AG04449 (cell line): ENCODE measurements at regions of chr6 and their contacts with region 1.

Region 1: DNA sequence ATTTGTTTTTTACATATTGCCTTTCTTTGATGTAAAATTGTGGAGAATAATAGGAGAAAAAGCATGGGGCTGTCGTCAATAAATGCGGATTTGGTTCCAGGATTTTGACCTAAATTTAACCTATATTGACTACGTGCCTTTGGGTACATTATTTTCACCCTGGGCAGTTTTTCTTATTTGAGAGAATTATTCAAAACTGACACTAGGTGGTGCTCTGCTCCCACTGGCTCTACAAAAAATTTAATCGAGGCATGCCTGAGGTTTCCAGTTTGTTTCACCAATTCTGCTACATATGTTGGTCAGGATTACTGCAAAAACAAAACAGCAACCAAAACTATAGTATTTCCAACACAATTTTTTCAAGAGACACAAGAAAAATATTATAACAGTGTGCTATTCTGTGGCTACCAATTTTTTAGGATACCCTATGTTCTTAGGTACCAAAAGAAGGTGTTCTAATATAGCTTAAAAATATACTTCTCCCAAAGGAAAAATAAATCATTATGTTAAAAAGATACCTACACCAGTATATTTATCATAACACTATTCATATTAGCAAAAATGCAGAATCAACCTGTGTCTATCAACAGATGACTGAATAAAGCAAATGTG is 48.6 kb upstream of the FABP7 start:
- DNase-seq: peak; percentile 12
- H3K4me3 ChIP-seq: no peak overlapping the region
- CTCF ChIP-seq: peak; percentile 46

Region 2: DNA sequence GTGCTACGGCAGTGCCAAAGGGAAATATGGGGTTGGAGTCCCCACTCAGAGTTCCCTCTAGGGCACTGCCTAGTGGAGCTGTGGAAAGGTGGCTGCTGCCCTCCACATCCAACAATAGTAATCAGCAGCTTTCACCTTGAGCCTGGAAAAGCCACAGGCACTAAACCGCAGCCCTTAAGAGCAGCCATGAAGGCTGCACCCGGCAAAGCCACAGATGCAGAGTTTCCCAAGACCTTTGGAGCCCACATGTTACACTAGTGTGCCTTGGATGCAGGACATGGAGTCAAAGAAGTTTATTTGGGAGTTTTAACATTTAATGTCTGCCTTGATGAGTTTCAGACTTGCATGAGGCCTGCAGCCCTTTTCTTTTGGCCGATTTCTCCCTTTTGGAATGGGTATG is 422.8 kb before region 1 on chr6:
- CTCF ChIA-PET with region 1: no interaction called
- POLR2A ChIA-PET with region 1: no interaction called
- DNase-seq: no peak
- H3K4me3 ChIP-seq: no peak overlapping the region
- CTCF ChIP-seq: no peak

Region 3: DNA sequence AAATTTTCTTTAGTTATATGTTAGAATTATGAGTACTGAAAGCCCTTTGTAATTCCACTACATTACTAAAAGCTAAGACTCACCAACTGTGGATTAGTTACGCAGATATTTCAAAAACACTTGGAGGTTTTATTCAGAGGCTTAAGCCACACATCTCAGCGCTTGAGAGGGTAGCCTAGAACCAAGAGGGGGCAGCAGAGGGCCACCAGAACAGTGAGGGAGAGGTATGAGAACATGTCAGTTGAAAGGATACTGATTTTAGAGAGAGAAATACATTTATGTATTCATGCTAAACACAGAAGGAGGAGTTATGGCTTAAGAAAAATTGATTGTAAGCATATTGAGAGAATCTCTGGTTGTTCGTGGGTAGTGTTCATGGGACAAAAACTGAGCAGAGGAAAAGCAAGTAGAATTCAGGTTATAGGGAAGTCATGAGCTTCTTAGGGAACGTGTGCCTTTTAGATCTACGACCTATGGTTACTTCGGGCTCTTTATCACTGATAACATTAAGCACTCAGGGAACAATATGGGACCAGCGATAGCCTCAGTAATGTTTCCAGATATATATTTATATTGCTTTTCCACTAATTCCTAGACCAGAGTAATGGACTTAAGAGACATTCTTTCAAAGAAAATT is 238.8 kb before region 1 on chr6:
- CTCF ChIA-PET with region 1: interaction called, 102 read pairs
- POLR2A ChIA-PET with region 1: no interaction called
- DNase-seq: peak; percentile 19
- H3K4me3 ChIP-seq: no peak overlapping the region
- CTCF ChIP-seq: peak; percentile 87

Region 4: DNA sequence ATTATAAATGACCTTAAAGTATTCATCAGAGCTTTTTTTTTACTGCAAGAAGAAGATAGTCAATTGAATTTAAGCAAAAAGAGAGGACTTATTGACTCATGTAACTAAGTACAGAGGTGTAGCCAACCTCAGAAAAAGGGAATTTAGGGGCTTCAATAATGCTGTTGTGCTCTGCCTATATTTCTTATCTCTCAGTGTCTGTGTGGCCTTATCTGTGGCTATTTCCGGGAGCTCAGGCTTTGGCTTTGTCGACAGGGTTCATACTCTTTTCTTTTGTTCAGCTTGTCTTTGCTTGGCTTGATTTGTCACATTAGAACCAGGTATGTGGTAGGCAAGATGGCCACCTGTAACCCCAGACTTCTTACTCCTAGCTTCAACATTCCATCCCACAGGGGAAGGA is 10.1 kb after region 1 on chr6:
- CTCF ChIA-PET with region 1: interaction called, 19 read pairs
- POLR2A ChIA-PET with region 1: no interaction called
- DNase-seq: no peak
- H3K4me3 ChIP-seq: no peak overlapping the region
- CTCF ChIP-seq: no peak

Region 5: GRCh38 chr6:122789182-122790027 is 58.5 kb after region 1 on chr6 and contains the start of gene SMPDL3A:
- CTCF ChIA-PET with region 1: interaction called, 15 read pairs
- POLR2A ChIA-PET with region 1: no interaction called
- DNase-seq: no peak
- H3K4me3 ChIP-seq: peak within 1 kb of the TSS; percentile 77
- CTCF ChIP-seq: peak; percentile 62

Region 6: GRCh38 chr6:123316733-123317323 is 585.9 kb after region 1 on chr6:
- CTCF ChIA-PET with region 1: interaction called, 10 read pairs
- POLR2A ChIA-PET with region 1: no interaction called
- DNase-seq: no peak
- H3K4me3 ChIP-seq: no peak overlapping the region
- CTCF ChIP-seq: no peak